ENCODE measurements at regions of chr20 and their contacts with region 1.

Region 1: DNA sequence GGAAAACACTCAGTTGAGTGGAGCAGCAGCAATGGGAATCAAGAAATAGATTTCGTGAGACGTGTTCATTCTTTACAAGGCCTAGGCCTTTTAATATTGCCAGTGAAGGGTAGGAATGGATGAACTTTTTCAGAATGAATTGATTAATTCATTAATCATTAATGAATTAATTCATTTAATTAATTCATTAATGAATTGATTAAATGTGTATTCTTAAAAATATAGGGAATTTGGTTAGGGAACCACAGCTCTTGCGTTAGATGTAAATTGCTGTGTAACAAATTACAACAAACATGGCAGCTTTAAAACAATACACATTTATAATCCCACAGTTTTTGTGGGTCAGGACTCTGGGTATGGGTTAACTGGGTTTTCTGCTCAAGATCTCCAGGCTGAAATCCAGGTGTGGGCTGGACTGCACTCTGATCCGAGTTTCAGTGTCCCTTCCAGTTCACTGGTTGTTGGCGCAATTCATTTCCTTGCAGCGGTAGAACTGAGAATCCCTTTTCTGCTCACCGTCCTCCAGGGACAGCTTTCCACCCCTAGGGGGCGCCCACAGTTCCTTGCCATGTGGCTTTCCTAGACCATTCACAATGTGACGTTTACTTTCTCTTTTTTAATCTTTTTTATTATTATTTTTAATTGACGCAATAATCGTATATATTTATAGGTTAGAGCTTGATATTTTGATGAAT is 32.8 kb upstream of the BCAS1 start:
- DNase-seq: peak; percentile 83
- H3K4me3 Mint-ChIP-seq: no peak overlapping the region
- H3K27ac Mint-ChIP-seq: no peak overlapping the region
- H3K4me1 Mint-ChIP-seq: peaks cover 21% of the 10 kb centered on the region
- H3K27me3 Mint-ChIP-seq: no peaks in the 10 kb centered on the region
- CTCF ChIP-seq: peak; percentile 77

Region 2: GRCh38 chr20:54115151-54115854 is 12.1 kb after region 1 on chr20:
- CTCF ChIA-PET with region 1: interaction called, 66 read pairs
- POLR2A ChIA-PET with region 1: interaction called, 52 read pairs
- intact Hi-C with region 1: no loop called
- DNase-seq: peak; percentile 13
- H3K4me3 Mint-ChIP-seq: no peak overlapping the region
- H3K27ac Mint-ChIP-seq: peak overlapping the region; percentile 81
- H3K4me1 Mint-ChIP-seq: peaks cover 18% of the 10 kb centered on the region
- H3K27me3 Mint-ChIP-seq: no peaks in the 10 kb centered on the region
- CTCF ChIP-seq: no peak

Region 3: GRCh38 chr20:54132612-54133433 is 29.6 kb after region 1 on chr20:
- CTCF ChIA-PET with region 1: interaction called, 30 read pairs
- POLR2A ChIA-PET with region 1: interaction called, 73 read pairs
- intact Hi-C with region 1: no loop called
- DNase-seq: peak; percentile 99
- H3K4me3 Mint-ChIP-seq: no peak overlapping the region
- H3K27ac Mint-ChIP-seq: no peak overlapping the region
- H3K4me1 Mint-ChIP-seq: peaks cover 8% of the 10 kb centered on the region
- H3K27me3 Mint-ChIP-seq: no peaks in the 10 kb centered on the region
- CTCF ChIP-seq: no peak

Region 4: DNA sequence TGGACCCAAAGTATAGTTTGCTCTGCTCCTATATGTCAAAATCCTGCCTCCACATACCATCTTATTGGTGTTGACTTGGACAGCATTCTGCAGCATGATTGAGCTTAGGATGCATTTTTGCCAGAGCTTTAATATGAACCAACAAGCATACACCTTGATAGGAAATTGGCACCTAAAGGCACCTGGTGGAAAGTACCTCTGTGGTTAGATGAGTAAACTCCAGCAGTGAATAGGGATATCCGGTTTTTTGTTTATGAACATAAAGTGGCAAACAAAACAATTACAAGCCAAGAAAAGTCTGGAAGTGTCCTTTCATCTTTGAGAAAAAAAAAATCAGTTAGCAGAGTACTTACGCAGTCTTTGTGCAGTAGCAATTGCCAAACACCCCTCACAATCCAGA is 76.7 kb after region 1 on chr20:
- CTCF ChIA-PET with region 1: interaction called, 25 read pairs
- POLR2A ChIA-PET with region 1: interaction called, 13 read pairs
- intact Hi-C with region 1: no loop called
- DNase-seq: peak; percentile 72
- H3K4me3 Mint-ChIP-seq: no peak overlapping the region
- H3K27ac Mint-ChIP-seq: peak overlapping the region; percentile 13
- H3K4me1 Mint-ChIP-seq: peaks cover 30% of the 10 kb centered on the region
- H3K27me3 Mint-ChIP-seq: no peaks in the 10 kb centered on the region
- CTCF ChIP-seq: no peak

Region 5: DNA sequence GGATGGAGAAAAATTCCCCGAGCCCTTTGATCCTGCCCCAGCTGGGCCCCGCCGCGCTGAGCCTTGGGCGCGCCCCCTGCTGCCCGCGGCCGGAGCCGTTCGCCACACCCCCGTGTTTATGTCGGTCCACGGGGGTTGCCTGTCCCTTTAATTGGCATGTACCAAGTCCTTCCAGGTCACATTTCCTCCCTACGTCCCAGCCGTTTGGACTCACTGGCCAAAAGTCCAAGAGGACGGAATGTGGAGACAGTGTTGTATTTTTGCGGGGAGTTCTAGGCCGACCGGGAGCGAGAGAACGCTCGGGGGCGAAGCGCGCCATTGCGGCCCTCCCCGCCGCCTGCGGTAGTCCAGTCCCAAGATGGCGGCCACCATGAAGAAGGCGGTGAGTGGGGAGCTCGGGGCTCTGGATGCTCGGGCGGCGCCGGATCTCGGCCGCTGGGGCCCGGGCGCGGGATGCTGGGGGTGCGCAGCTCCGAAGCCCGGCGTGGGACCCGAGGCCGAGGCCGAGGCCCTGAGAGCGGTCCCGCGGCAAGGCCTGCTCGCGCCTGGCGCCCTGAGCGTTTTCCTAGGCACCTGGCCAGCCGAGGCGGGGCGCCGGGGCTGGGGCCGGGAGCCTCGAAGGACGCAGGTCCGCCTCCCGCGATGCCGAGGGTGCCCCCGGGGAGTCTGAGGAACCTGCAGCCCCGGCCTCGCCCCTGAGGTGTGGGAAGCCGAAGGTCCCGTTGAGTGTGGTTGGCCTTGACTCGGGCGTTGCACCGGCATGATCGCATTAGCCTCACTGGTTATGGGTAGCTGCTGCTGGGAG is 104.7 kb after region 1 on chr20 and contains the start of gene PFDN4:
- CTCF ChIA-PET with region 1: interaction called, 1,436 read pairs
- POLR2A ChIA-PET with region 1: interaction called, 27 read pairs
- intact Hi-C with region 1: no loop called
- DNase-seq: peak; percentile 85
- H3K4me3 Mint-ChIP-seq: peak within 1 kb of the TSS; percentile 76
- H3K27ac Mint-ChIP-seq: peak within 1 kb of the TSS; percentile 100
- H3K4me1 Mint-ChIP-seq: peaks cover 16% of the 10 kb centered on the region
- H3K27me3 Mint-ChIP-seq: no peaks in the 10 kb centered on the region
- CTCF ChIP-seq: peak; percentile 73
- total RNA-seq, gene PFDN4: 37.0 and 45.4 TPM in 2 replicates

Region 6: GRCh38 chr20:54649511-54649962 is 546.3 kb after region 1 on chr20:
- CTCF ChIA-PET with region 1: interaction called, 10 read pairs
- POLR2A ChIA-PET with region 1: no interaction called
- intact Hi-C with region 1: loop called (anchors 5 kb)
- DNase-seq: peak; percentile 82
- H3K4me3 Mint-ChIP-seq: no peak overlapping the region
- H3K27ac Mint-ChIP-seq: no peak overlapping the region
- H3K4me1 Mint-ChIP-seq: no peaks in the 10 kb centered on the region
- H3K27me3 Mint-ChIP-seq: peaks cover 39% of the 10 kb centered on the region
- CTCF ChIP-seq: peak; percentile 71

Measured in MCF 10A (cell line).